Sigmoid colon (tissue), 7 donors: ENCODE measurements at regions of chr16 and their contacts with region 1.

Region 1: GRCh38 chr16:63289852-63290460 is 1253.7 kb upstream of the CDH8 start:
- DNase-seq: peak; percentile 60
- H3K4me3 ChIP-seq: no peak overlapping the region
- H3K27ac ChIP-seq: no peak overlapping the region
- H3K4me1 ChIP-seq: no peaks in the 10 kb centered on the region
- H3K27me3 ChIP-seq: no peaks in the 10 kb centered on the region
- CTCF ChIP-seq: peak in 3 of 4 experiments; percentile 65 to 86 (median 74)
- EP300 ChIP-seq: no peak
- POLR2A ChIP-seq: no peak

Region 2: GRCh38 chr16:62870554-62870953 is 419.4 kb before region 1 on chr16:
- intact Hi-C with region 1: loop called (anchors 10 kb)
- DNase-seq: no peak
- H3K4me3 ChIP-seq: no peak overlapping the region
- H3K27ac ChIP-seq: no peak overlapping the region
- H3K4me1 ChIP-seq: peaks cover 0 to 35% (median 27%) of the 10 kb centered on the region in 4 donors
- H3K27me3 ChIP-seq: no peaks in the 10 kb centered on the region
- CTCF ChIP-seq: no peak
- EP300 ChIP-seq: no peak
- POLR2A ChIP-seq: no peak

Region 3: DNA sequence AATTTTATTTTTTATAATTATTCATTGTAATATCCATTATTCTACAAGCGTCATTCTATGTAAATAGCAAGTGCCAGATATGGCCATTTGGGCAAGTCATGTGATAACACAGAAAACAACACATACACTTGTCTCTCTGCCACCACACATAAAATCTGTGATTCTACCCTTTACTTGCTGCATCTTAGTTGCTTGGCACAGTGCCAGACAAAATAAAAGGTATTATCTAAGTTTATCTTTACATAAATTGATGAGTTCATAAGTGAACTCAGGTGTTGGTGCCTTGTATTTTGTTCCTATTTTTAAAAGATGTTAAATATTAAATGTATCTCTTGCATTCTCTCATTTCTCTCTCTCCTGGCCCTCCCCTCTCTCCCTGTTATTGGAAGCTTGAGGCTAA is 373.2 kb after region 1 on chr16:
- intact Hi-C with region 1: no loop called
- DNase-seq: no peak
- H3K4me3 ChIP-seq: no peak overlapping the region
- H3K27ac ChIP-seq: no peak overlapping the region
- H3K4me1 ChIP-seq: no peaks in the 10 kb centered on the region
- H3K27me3 ChIP-seq: no peaks in the 10 kb centered on the region
- CTCF ChIP-seq: no peak
- EP300 ChIP-seq: no peak
- POLR2A ChIP-seq: no peak